GM12878 (cell line): ENCODE measurements at regions of chr15 and their contacts with region 1.

Region 1: GRCh38 chr15:85044251-85044853 is 62.7 kb downstream of the PDE8A start:
- DNase-seq: peak; percentile 44
- ATAC-seq: peak; percentile 88
- H3K4me3 ChIP-seq: no peak overlapping the region
- H3K27ac ChIP-seq: no peak overlapping the region
- H3K4me1 ChIP-seq: no peaks in the 10 kb centered on the region; the same call in 1 of the 2 replicates
- H3K27me3 ChIP-seq: no peaks in the 10 kb centered on the region
- CTCF ChIP-seq: peak; percentile 66 to 77 (median 74)
- EP300 ChIP-seq: no peak
- POLR2A ChIP-seq: no peak
- RAD21 ChIP-seq: peak; percentile 85

Region 2: DNA sequence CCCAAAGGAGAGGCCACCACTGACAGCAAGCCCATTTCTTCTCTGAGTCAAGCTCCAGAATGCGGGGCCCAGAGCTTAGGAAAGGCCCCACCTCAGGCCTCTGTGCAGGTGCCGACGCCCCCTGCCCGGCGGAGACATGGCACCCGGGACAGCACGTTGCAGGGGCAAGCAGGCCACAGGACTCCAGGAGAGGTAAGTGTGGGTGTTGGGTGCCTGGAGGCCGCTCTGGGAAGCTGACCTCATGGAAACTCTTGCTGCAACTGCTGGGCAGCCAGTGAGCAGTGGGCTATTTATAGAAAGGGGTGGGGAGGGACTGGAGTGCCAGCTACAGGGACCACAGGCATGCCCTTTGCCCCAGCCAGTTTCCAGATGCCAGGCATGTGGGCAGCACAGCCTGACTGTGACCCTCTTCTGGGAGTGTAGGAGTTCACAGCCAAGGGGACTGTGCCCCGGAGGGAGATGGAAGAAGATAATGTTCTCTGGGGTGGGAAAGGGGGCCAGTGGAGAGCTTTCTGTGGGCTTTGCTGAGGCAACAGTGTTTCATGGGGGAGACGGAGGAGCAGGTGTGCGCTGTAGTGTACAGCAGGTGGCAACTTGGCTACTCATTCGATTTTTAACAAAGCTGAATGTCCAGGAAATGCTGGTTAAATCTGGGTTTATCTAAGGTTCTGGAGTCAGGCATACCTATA is 203.5 kb before region 1 on chr15:
- CTCF ChIA-PET with region 1: interaction called, 10 read pairs
- POLR2A ChIA-PET with region 1: no interaction called
- RAD21 ChIA-PET with region 1: no interaction called
- SMC1A ChIA-PET with region 1: no interaction called
- in situ Hi-C with region 1: no loop called
- intact Hi-C with region 1: loop called (anchors 10 kb)
- DNase-seq: no peak
- ATAC-seq: no peak
- H3K4me3 ChIP-seq: no peak overlapping the region
- H3K27ac ChIP-seq: no peak overlapping the region
- H3K4me1 ChIP-seq: no peaks in the 10 kb centered on the region
- H3K27me3 ChIP-seq: peaks cover 0 to 5% of the 10 kb centered on the region in 2 experiments; a peak in 2 of 4 replicates
- CTCF ChIP-seq: no peak
- EP300 ChIP-seq: no peak
- POLR2A ChIP-seq: no peak
- RAD21 ChIP-seq: no peak

Region 3: DNA sequence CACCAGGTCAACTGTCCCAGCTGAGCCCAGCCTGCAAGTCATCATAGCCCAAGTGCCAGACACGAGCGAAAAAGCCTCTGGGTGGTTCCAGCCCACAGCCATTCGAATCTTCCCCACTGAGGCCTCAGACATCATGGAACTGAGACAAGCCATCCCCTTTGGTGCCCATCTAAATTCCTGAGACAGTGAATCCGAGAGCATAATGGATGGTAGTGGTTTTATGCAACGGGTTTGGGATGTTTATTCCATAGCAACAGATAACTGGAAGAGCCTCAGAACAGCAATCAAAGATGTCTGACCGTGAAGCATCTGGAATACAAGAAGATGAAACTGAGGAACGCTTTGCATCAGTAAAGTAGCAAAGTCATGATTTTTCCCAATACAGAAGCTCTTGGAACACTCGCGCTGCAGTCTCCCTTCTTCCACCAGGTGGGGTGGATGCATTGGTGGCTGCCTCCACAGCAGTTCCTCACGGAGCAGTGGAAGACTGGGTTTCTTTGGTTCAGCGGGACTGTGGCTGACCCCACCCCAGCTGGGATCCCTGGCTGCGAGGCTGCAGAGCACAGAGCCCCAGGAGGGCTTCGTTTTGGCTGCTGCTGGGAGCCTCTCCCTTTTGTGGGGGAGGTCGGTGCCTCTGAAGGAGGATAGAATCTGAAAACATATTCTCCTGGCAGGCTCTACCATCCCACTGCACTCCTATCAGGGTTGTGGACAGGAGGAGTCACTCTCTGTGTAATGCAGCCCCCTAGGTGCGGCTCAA is 89.1 kb before region 1 on chr15:
- CTCF ChIA-PET with region 1: interaction called, 47 read pairs
- POLR2A ChIA-PET with region 1: no interaction called
- RAD21 ChIA-PET with region 1: interaction called, 36 read pairs
- SMC1A ChIA-PET with region 1: interaction called, 23 read pairs
- in situ Hi-C with region 1: loop called (anchors 5 kb)
- intact Hi-C with region 1: loop called (anchors 1 kb)
- DNase-seq: no peak
- ATAC-seq: peak; percentile 87
- H3K4me3 ChIP-seq: no peak overlapping the region
- H3K27ac ChIP-seq: no peak overlapping the region
- H3K4me1 ChIP-seq: no peaks in the 10 kb centered on the region
- H3K27me3 ChIP-seq: peaks cover 0 to 3% of the 10 kb centered on the region in 2 experiments; a peak in 1 of 4 replicates
- CTCF ChIP-seq: peak; percentile 71 to 86 (median 75)
- EP300 ChIP-seq: no peak
- POLR2A ChIP-seq: no peak
- RAD21 ChIP-seq: peak; percentile 87

Region 4: DNA sequence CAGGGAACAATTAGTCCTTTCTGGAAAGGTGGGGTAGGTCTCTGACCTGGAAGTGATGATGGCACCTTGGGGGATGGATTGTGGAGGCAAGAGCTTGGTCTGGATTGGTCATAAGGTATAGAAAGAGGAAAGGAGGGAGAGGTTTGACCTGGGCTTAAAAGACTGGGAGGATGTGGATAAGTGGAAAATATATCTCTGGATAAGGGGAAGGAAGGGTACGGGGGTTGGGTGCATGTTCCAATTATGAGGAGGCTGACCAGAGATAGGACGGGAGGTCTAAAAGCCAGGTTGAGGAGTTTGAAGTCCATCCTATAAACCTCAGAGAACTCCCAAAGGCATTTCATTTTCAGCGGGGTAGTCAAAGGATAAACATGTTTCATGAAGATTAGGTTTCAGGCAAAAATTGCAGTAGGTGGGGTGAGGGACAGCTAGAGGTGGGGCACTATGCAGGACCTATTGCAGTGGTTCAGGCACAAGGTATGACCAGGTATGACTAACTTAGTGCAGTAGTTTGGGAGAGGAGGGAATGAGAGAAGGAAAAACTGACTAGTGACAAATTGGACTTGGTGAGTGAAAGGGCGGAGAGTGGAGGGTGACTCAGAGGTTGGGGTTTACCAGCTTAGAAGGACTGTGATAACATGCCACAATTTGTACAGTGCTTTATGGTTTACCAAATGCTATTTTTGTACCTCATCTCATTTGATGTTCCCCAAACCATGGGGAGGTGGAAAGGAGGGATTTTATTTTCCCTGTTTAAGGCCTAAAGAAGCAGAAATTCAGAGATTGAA is 52.0 kb before region 1 on chr15:
- CTCF ChIA-PET with region 1: interaction called, 23 read pairs
- POLR2A ChIA-PET with region 1: no interaction called
- RAD21 ChIA-PET with region 1: interaction called, 29 read pairs
- SMC1A ChIA-PET with region 1: interaction called, 31 read pairs
- in situ Hi-C with region 1: no loop called
- intact Hi-C with region 1: no loop called
- DNase-seq: no peak
- ATAC-seq: peak; percentile 51
- H3K4me3 ChIP-seq: no peak overlapping the region
- H3K27ac ChIP-seq: peak overlapping the region; percentile 24
- H3K4me1 ChIP-seq: peaks cover 38% of the 10 kb centered on the region
- H3K27me3 ChIP-seq: no peaks in the 10 kb centered on the region
- CTCF ChIP-seq: no peak
- EP300 ChIP-seq: no peak
- POLR2A ChIP-seq: no peak
- RAD21 ChIP-seq: no peak

Region 5: DNA sequence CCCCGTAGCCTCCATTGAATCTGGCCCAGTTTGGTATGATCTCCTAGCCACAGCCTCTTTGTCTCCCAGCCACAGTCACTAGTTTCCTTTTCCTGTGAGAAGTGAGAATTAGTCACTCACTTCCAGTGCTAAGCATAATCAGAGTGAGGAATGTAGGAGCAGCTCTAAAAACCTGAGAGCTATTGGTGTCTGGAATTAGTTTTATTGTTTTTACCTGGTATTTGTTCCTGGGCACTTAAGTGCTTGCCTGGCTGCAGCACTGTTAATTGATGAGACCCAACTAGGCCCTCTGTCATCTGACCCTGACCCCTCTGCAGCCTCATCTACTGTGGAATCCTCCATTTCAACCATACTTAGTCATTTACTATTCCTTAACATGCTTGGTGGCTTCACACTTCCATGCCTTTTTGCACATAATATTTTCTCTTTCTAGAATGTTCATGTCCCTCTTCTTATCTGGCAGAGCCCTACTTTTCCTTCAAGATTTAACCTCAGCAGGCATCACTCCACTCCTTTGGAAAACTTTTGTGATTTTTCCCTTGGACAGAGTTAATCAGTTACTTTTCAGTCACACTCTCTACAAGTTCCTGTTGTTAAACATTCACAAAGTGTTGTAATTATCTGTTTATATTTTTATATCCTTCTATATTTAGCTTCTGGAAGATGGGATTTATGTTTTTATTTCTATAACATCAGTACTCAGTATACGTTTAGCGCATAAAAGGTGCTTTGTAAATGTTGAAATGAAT is 13.9 kb before region 1 on chr15:
- CTCF ChIA-PET with region 1: interaction called, 20 read pairs
- POLR2A ChIA-PET with region 1: no interaction called
- RAD21 ChIA-PET with region 1: interaction called, 7 read pairs
- SMC1A ChIA-PET with region 1: interaction called, 15 read pairs
- in situ Hi-C with region 1: no loop called
- intact Hi-C with region 1: no loop called
- DNase-seq: no peak
- ATAC-seq: peak; percentile 60
- H3K4me3 ChIP-seq: no peak overlapping the region
- H3K27ac ChIP-seq: peak overlapping the region; percentile 29
- H3K4me1 ChIP-seq: peaks cover 25% of the 10 kb centered on the region
- H3K27me3 ChIP-seq: no peaks in the 10 kb centered on the region
- CTCF ChIP-seq: no peak
- EP300 ChIP-seq: no peak
- POLR2A ChIP-seq: no peak
- RAD21 ChIP-seq: no peak